H1 (cell line): ENCODE measurements at regions of chr2 and their contacts with region 1.

Region 1: GRCh38 chr2:65186872-65187851 is 40.5 kb upstream of the ACTR2 start:
- DNase-seq: peak; percentile 54 to 85
- H3K4me3 ChIP-seq: no peak overlapping the region
- H3K27ac ChIP-seq: no peak overlapping the region
- H3K4me1 ChIP-seq: no peaks in the 10 kb centered on the region; a peak in 1 of 7 replicates
- H3K27me3 ChIP-seq: no peaks in the 10 kb centered on the region
- CTCF ChIP-seq: peak; percentile 74 to 88 (median 82)
- EP300 ChIP-seq: no peak
- POLR2A ChIP-seq: no peak
- RAD21 ChIP-seq: peak; percentile 77 to 84

Region 2: DNA sequence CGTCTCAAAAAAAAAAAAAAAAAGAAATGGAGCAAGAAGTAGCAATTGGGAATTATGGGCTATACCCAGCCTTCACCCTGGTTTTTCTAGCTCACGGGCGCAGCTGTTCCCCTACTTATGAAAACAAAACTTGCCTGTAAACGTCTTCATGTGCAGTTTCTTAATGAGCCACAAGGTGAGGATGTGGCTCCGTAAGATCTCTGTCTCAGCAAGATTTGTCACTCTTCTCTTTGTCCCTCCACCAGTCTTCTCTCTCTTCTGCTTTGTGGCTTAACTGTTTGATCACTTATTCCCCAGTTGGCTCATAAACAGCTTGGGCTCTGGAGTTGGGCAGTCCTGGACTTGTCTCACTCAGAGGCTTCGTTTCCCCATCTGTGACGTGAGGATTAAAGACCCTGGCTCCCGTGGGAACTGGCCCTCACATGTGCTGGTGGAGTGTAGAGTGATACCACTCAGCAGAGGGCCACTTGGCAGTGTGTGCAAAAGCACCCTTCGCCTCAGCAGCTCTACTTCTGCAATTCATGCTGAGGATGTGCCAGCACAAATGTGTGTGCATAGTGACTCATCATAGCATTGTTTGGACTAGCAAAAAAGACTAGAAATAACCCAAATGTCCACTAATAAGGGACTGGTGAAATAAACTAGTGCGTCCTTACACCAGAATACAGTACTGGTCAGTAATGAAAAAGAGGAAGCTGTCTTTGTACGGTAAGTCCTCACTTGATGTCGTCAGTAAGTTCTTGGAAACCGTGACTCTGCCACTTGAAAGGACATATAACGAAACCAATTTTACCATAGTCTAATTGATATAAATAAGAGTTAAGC is 122.2 kb before region 1 on chr2:
- CTCF ChIA-PET with region 1: interaction called, 12 read pairs
- POLR2A ChIA-PET with region 1: no interaction called
- DNase-seq: no peak
- H3K4me3 ChIP-seq: no peak overlapping the region
- H3K27ac ChIP-seq: no peak overlapping the region
- H3K4me1 ChIP-seq: no peaks in the 10 kb centered on the region
- H3K27me3 ChIP-seq: no peaks in the 10 kb centered on the region
- CTCF ChIP-seq: peak in 2 of 3 experiments; percentile 69 to 76; a peak in 3 of 4 replicates
- EP300 ChIP-seq: no peak
- POLR2A ChIP-seq: no peak
- RAD21 ChIP-seq: peak; percentile 75 to 83

Region 3: GRCh38 chr2:65070172-65070830 is 116.9 kb before region 1 on chr2:
- CTCF ChIA-PET with region 1: interaction called, 12 read pairs
- POLR2A ChIA-PET with region 1: no interaction called
- DNase-seq: no peak
- H3K4me3 ChIP-seq: no peak overlapping the region
- H3K27ac ChIP-seq: no peak overlapping the region
- H3K4me1 ChIP-seq: peaks cover 0 to under 1% (median 0%) of the 10 kb centered on the region in 4 experiments; a peak in 1 of 7 replicates
- H3K27me3 ChIP-seq: no peaks in the 10 kb centered on the region
- CTCF ChIP-seq: peak; percentile 3 to 37 (median 28); a peak in 3 of 4 replicates
- EP300 ChIP-seq: no peak
- POLR2A ChIP-seq: no peak
- RAD21 ChIP-seq: peak in 1 of 2 experiments; percentile 41; a peak in 2 of 4 replicates

Region 4: DNA sequence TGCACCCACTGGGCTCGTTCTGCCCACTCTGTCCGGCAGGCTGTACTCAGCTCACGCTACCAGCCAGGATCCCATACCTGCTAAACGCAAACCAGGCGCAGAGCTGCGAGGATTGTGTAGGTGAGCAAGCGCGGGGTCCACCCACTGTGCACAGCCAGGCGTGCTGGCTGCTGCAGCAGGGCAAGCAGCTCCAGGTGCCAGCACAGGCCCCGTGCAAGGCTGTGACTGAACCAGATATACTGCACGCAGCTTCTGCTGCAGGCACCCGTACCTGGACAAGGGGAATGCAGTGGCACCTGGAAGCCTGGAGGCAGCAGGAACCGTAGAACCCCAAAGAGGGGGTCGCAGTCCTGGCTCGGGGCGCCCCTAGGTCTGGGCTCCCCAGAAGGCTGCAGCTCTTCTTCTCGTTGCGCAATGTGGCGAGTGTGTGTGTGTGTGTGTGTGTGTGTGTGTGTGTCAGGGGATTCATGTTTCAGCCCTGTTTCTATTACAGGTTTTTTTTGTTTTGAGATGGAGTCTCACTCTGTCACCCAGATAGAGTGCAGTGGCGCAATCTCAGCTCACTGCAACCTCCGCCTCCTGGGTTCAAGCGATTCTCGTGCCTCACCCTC is 11.1 kb before region 1 on chr2:
- CTCF ChIA-PET with region 1: interaction called, 14 read pairs
- POLR2A ChIA-PET with region 1: interaction called, 5 read pairs
- DNase-seq: no peak
- H3K4me3 ChIP-seq: no peak overlapping the region
- H3K27ac ChIP-seq: no peak overlapping the region
- H3K4me1 ChIP-seq: no peaks in the 10 kb centered on the region
- H3K27me3 ChIP-seq: no peaks in the 10 kb centered on the region
- CTCF ChIP-seq: no peak
- EP300 ChIP-seq: no peak
- POLR2A ChIP-seq: no peak
- RAD21 ChIP-seq: no peak

Region 5: GRCh38 chr2:65198737-65199136 is 11.6 kb after region 1 on chr2:
- CTCF ChIA-PET with region 1: interaction called, 10 read pairs
- POLR2A ChIA-PET with region 1: no interaction called
- DNase-seq: no peak
- H3K4me3 ChIP-seq: no peak overlapping the region
- H3K27ac ChIP-seq: no peak overlapping the region
- H3K4me1 ChIP-seq: peaks cover 0 to 5% (median 3%) of the 10 kb centered on the region in 4 experiments; a peak in 2 of 7 replicates
- H3K27me3 ChIP-seq: no peaks in the 10 kb centered on the region
- CTCF ChIP-seq: no peak
- EP300 ChIP-seq: no peak
- POLR2A ChIP-seq: no peak
- RAD21 ChIP-seq: no peak

Region 6: GRCh38 chr2:65316072-65316471 is 128.9 kb after region 1 on chr2:
- CTCF ChIA-PET with region 1: no interaction called
- POLR2A ChIA-PET with region 1: no interaction called
- DNase-seq: no peak
- H3K4me3 ChIP-seq: no peak overlapping the region
- H3K27ac ChIP-seq: no peak overlapping the region
- H3K4me1 ChIP-seq: no peaks in the 10 kb centered on the region
- H3K27me3 ChIP-seq: no peaks in the 10 kb centered on the region
- CTCF ChIP-seq: no peak
- EP300 ChIP-seq: no peak
- POLR2A ChIP-seq: no peak
- RAD21 ChIP-seq: no peak